Activated T-helper 2 cell treated with anti-CD3 and anti-CD28 coated beads, Interferon-gamma antibody, Interleukin-2, Interleukin-4, amounts not matched to agents 10 μg/mL and 5 μg/mL and 100 μg/mL, durations not matched to agents 14 hours and 24 hours and 36 hours (primary cell): ENCODE measurements at regions of chr1 and their contacts with region 1.

Region 1: DNA sequence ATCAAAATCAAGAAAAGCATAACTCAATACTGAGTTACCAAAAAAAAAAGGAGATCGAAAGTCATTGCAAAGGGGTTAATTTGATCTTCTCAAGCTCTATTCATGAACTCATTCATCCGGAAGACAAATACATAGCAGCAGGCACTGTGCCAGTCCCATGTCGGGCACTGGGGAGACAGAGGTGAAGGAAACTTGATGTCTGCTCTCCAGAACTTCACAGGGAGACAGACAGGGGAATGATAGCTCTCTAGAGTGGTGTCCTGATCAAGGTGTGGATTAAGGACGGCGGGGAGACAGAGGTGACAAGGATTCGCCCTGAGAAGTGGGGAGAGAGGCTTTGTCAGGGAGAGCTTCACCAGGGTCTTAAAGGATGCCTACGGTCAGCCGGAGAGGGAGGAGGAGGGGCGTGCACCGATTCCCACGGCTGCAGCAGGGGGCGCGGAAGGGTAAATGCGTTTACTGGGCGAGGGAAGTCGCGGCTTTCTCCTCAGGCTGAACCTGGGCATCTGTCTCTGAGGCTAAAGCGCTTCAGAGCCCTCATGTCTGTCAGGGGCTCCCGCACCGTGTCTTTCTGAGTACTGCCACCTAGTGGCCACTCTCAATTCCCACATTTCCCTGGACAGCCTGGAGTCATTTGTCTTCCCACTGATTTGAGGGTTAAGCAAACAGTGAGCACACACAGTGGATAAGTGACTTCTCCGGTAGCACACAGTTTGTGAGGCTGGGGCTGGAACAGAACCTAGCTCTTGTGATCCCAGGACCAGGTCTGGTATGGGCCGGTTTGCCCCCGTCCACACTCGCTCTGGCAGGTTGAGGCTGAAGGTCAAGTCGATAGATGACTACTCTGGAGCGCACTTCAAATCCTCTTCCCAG is 152.8 kb downstream of the TENT5C start:
- DNase-seq: peak; percentile 60
- H3K4me3 Mint-ChIP-seq: peak overlapping the region; percentile 75
- H3K27ac Mint-ChIP-seq: no peak overlapping the region
- H3K4me1 Mint-ChIP-seq: peaks cover 10% of the 10 kb centered on the region
- H3K27me3 Mint-ChIP-seq: peaks cover 37% of the 10 kb centered on the region

Region 2: GRCh38 chr1:117615474-117615873 is 143.2 kb before region 1 on chr1:
- intact Hi-C with region 1: no loop called
- DNase-seq: no peak
- H3K4me3 Mint-ChIP-seq: no peak overlapping the region
- H3K27ac Mint-ChIP-seq: no peak overlapping the region
- H3K4me1 Mint-ChIP-seq: peaks cover 59% of the 10 kb centered on the region
- H3K27me3 Mint-ChIP-seq: peaks cover 12% of the 10 kb centered on the region

Region 3: GRCh38 chr1:117895482-117896114 is 136.9 kb after region 1 on chr1:
- intact Hi-C with region 1: loop called (anchors 2 kb)
- DNase-seq: peak; percentile 27
- H3K4me3 Mint-ChIP-seq: no peak overlapping the region
- H3K27ac Mint-ChIP-seq: no peak overlapping the region
- H3K4me1 Mint-ChIP-seq: no peaks in the 10 kb centered on the region
- H3K27me3 Mint-ChIP-seq: no peaks in the 10 kb centered on the region